CD8-positive, alpha-beta T cell (primary cell): ENCODE measurements at regions of chr3 and their contacts with region 1.

Region 1: DNA sequence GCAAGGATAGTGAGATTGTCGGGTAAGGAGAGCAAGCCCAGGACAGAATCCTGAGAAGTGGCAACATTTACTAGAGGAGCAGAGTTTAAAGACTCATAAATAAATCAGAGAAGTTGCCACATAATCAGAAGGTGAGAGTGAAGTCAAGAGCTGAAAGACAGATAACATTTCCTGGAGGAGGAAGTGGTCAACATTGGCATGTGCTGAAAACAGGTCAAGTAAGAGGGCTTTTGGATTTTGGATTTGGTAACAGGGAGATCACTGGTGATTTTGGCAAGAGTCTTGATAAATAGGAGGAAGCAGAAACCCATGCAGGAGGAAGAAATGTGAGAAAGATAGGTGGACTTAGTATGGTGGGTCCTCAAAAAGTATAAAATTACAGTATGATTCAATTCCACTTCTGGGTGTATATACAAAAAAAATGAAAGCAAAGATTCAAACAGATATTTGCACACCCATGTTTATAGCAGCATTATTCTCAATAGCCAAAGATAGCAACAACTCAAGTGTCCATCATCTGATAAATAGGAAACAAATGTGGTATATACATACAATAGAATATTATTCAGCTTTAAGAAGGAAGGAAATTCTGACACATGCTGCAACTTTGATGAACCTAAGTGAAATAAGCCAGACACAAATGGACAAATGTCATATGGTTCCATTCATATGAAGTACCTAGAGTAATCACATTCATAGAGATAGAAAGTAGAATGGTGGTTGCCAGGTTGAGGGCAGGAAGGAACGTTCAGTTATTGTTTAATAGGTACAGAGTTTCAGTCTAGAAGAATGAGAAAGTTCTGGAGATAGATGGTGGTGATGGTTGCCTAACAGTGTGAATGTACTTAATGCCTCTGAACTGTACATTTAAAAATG is 27.3 kb upstream of the MBNL1 start:
- DNase-seq: peak in 2 of 9 experiments; percentile 40 to 62
- ATAC-seq: no peak
- H3K4me3 ChIP-seq: peak overlapping the region in 1 of 2 experiments; percentile 6
- H3K4me3 Mint-ChIP-seq: peak overlapping the region; percentile 92
- H3K27ac ChIP-seq: peak overlapping the region; percentile 11 to 71
- H3K27ac Mint-ChIP-seq: peak overlapping the region; percentile 96
- H3K4me1 ChIP-seq: peaks cover 51% of the 10 kb centered on the region
- H3K4me1 Mint-ChIP-seq: peaks cover 61% of the 10 kb centered on the region
- H3K27me3 ChIP-seq: no peaks in the 10 kb centered on the region
- H3K27me3 Mint-ChIP-seq: no peaks in the 10 kb centered on the region
- CTCF ChIP-seq: no peak

Region 2: DNA sequence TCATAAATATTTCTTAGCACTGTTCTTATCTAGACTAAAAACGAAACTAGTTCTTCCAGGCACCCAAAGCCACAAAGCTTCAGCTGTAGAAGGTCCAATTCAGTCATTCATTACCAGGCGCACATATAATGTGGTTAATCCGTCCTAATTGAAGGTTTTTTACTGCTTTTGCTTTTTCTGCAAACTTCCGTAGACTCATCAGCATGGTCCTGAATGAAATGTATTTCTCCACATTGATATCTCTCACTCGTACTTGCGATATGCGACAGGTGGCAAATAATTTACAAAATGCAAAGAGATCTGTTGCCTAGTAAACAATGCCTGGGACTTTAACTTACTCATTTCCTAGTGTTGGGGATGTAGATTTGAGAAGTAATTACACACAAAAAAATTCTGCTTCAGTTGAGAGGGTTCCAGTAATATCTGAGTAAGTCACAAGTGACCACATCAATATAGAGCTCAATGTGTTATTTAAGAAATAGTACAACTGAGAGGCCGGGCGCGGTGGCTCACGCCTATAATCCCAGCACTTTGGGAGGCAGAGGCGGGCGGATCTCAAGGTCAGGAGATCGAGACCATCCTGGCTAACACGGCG is 47.6 kb before region 1 on chr3:
- CTCF ChIA-PET with region 1: interaction called, 11 read pairs
- POLR2A ChIA-PET with region 1: interaction called, 7 read pairs
- intact Hi-C with region 1: loop called in 1 of 2 experiments (anchors 2 kb)
- DNase-seq: peak in 4 of 9 experiments; percentile 20 to 82 (median 51)
- ATAC-seq: peak; percentile 65
- H3K4me3 ChIP-seq: peak overlapping the region; percentile 54 to 59
- H3K4me3 Mint-ChIP-seq: peak overlapping the region; percentile 83
- H3K27ac ChIP-seq: peak overlapping the region; percentile 62 to 80
- H3K27ac Mint-ChIP-seq: peak overlapping the region; percentile 90
- H3K4me1 ChIP-seq: peaks cover 65% of the 10 kb centered on the region
- H3K4me1 Mint-ChIP-seq: peaks cover 76% of the 10 kb centered on the region
- H3K27me3 ChIP-seq: no peaks in the 10 kb centered on the region
- H3K27me3 Mint-ChIP-seq: no peaks in the 10 kb centered on the region
- CTCF ChIP-seq: no peak

Region 3: GRCh38 chr3:152222327-152222726 is 19.1 kb before region 1 on chr3:
- CTCF ChIA-PET with region 1: interaction called, 5 read pairs
- POLR2A ChIA-PET with region 1: interaction called, 4 read pairs
- intact Hi-C with region 1: loop called in 1 of 2 experiments (anchors 2 kb)
- DNase-seq: no peak
- ATAC-seq: no peak
- H3K4me3 ChIP-seq: no peak overlapping the region
- H3K4me3 Mint-ChIP-seq: peak overlapping the region; percentile 64
- H3K27ac ChIP-seq: no peak overlapping the region
- H3K27ac Mint-ChIP-seq: peak overlapping the region; percentile 79
- H3K4me1 ChIP-seq: peaks cover 29% of the 10 kb centered on the region
- H3K4me1 Mint-ChIP-seq: peaks cover 62% of the 10 kb centered on the region
- H3K27me3 ChIP-seq: no peaks in the 10 kb centered on the region
- H3K27me3 Mint-ChIP-seq: no peaks in the 10 kb centered on the region
- CTCF ChIP-seq: no peak

Region 4: DNA sequence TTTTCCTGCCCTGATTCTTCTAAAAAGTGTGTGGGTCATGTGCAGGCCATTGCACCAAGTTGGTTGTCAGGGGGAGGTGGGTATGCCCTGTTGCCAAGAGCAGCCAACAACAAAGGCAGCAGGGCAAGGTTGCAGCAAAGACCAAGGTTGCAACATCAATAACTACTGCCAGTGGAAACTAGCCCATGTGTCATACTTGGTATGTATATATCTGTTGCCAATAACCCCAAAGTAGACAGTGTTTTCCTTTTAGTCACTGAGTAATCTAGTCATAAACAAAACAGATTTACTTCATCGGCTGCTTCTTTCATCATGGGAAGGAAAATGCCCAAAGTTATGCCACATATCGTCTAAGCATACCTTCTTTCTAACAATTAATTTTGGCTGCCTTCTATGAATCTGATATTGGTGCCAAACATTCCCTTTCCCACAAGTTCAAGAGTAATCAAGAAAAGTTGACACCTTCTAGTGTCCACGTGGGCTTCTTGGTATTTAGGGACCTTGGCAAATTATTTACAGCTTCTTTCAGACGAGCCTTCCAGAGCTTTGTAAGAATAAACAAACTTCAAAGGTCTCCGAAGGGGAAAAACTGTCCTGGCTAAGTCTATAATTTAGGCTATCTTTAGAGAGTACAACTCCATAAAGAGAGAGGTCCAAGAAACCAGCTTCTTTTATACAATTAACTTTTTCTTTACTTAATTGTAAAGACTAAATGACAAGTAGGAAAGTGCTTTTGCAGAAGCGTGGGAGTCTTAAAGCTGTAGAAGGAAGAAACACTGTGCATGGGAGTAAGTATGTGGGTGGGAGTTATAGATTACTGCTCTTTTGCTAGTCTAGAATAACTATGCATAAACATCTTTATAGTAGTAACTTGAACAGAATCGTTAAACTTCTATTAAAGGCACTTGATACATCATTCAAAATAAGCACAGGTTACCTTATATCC is 17.3 kb after region 1 on chr3:
- CTCF ChIA-PET with region 1: interaction called, 10 read pairs
- POLR2A ChIA-PET with region 1: interaction called, 14 read pairs
- intact Hi-C with region 1: loop called in 1 of 2 experiments (anchors 1 kb)
- DNase-seq: peak in 8 of 9 experiments; percentile 32 to 84 (median 67)
- ATAC-seq: peak; percentile 52
- H3K4me3 ChIP-seq: peak overlapping the region in 1 of 2 experiments; percentile 22
- H3K4me3 Mint-ChIP-seq: peak overlapping the region; percentile 72
- H3K27ac ChIP-seq: peak overlapping the region; percentile 49 to 78
- H3K27ac Mint-ChIP-seq: peak overlapping the region; percentile 98
- H3K4me1 ChIP-seq: peaks cover 80% of the 10 kb centered on the region
- H3K4me1 Mint-ChIP-seq: peaks cover 86% of the 10 kb centered on the region
- H3K27me3 ChIP-seq: no peaks in the 10 kb centered on the region
- H3K27me3 Mint-ChIP-seq: no peaks in the 10 kb centered on the region
- CTCF ChIP-seq: no peak

Region 5: DNA sequence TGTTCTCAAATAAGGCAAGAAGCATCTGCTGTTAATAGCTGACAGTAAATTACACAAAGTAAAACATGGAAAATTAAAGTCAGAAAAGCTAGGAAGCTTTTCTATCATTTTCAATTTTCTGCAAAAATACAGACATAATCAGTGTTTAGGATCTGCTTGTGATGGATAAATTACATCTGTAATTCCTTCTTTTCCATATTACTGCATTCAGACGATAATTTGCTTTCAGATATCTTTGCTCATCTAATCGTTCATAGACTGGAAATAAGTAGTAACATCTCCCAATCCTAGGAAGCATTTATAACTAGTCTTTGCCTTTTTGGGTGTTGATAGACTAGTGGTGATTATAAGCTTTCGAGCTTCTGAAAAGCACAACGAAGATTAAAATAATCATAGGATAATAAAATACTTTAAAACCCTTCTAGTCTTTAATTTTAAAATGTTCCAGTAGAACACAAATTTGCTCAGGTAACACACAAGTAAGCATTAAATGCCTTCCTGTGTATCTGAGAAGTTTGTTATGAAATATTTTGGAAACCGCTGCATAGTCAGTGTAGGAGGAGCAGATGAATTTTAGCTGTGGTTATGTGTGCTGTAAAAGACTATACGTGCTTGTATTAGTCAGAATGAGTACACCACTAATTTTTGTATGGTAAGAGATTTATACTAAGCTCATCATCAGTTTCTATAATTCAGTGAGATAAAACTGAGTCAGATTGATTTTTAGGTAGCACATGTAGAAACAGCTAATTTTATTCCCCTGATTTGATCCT is 68.3 kb after region 1 on chr3:
- CTCF ChIA-PET with region 1: interaction called, 3 read pairs
- POLR2A ChIA-PET with region 1: interaction called, 6 read pairs
- intact Hi-C with region 1: loop called in 1 of 2 experiments (anchors 2 kb)
- DNase-seq: peak in 2 of 9 experiments; percentile 40 to 57
- ATAC-seq: peak; percentile 89
- H3K4me3 ChIP-seq: no peak overlapping the region
- H3K4me3 Mint-ChIP-seq: peak overlapping the region; percentile 20
- H3K27ac ChIP-seq: peak overlapping the region in 1 of 2 experiments; percentile 56
- H3K27ac Mint-ChIP-seq: peak overlapping the region; percentile 84
- H3K4me1 ChIP-seq: peaks cover 72% of the 10 kb centered on the region
- H3K4me1 Mint-ChIP-seq: peaks cover 80% of the 10 kb centered on the region
- H3K27me3 ChIP-seq: no peaks in the 10 kb centered on the region
- H3K27me3 Mint-ChIP-seq: no peaks in the 10 kb centered on the region
- CTCF ChIP-seq: no peak

Region 6: DNA sequence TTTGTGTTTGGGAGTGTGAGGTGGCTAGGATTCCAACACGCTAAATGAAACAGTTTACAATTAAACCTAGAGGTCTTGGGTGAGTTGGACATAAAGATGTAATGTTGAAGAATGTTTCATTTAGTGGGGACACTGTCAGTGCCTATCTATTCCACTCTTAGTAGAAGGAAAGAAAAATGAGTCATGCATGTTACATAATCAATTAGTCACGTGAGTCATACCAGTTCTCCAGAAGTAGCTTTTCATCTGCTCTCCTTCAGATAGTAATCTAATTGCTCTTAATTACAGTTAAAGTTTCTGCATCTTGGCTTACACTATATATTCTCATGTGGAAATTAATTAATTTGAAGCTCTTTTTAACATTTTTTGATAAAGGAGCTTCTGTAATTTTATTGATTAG is 477.9 kb after region 1 on chr3:
- CTCF ChIA-PET with region 1: no interaction called
- POLR2A ChIA-PET with region 1: no interaction called
- intact Hi-C with region 1: no loop called
- DNase-seq: no peak
- ATAC-seq: no peak
- H3K4me3 ChIP-seq: no peak overlapping the region
- H3K4me3 Mint-ChIP-seq: no peak overlapping the region
- H3K27ac ChIP-seq: no peak overlapping the region
- H3K27ac Mint-ChIP-seq: no peak overlapping the region
- H3K4me1 ChIP-seq: no peaks in the 10 kb centered on the region
- H3K4me1 Mint-ChIP-seq: no peaks in the 10 kb centered on the region
- H3K27me3 ChIP-seq: no peaks in the 10 kb centered on the region
- H3K27me3 Mint-ChIP-seq: no peaks in the 10 kb centered on the region
- CTCF ChIP-seq: no peak